ENCODE measurements at regions of chr17 and their contacts with region 1.

Region 1: GRCh38 chr17:4966844-4967538 is 626 bp downstream of the SPAG7 start:
- DNase-seq: peak; percentile 100
- H3K4me3 ChIP-seq: peak overlapping the region; percentile 67 to 86 (median 81)
- H3K27ac ChIP-seq: peak overlapping the region; percentile 89
- H3K4me1 ChIP-seq: peaks cover 29% of the 10 kb centered on the region
- H3K27me3 ChIP-seq: no peaks in the 10 kb centered on the region
- CTCF ChIP-seq: no peak

Region 2: GRCh38 chr17:4986951-4987766 is 20.2 kb after region 1 on chr17 and contains the start of gene CAMTA2:
- CTCF ChIA-PET with region 1: no interaction called
- dilution Hi-C with region 1: no loop called
- in situ Hi-C with region 1: no loop called
- intact Hi-C with region 1: loop called (anchors 1 kb)
- DNase-seq: peak; percentile 50
- H3K4me3 ChIP-seq: peak within 1 kb of the TSS; percentile 78 to 91 (median 85)
- H3K27ac ChIP-seq: peak within 1 kb of the TSS; percentile 38
- H3K4me1 ChIP-seq: peaks cover 14% of the 10 kb centered on the region
- H3K27me3 ChIP-seq: no peaks in the 10 kb centered on the region
- CTCF ChIP-seq: peak; percentile 26 to 72
- total RNA-seq, gene CAMTA2: 15.0 to 69.1 TPM

Region 3: GRCh38 chr17:4997302-4998026 is 30.5 kb after region 1 on chr17 and contains the starts of genes INCA1 and KIF1C:
- CTCF ChIA-PET with region 1: no interaction called
- dilution Hi-C with region 1: no loop called
- in situ Hi-C with region 1: no loop called
- intact Hi-C with region 1: loop called (anchors 1 kb)
- DNase-seq: peak; percentile 90
- H3K4me3 ChIP-seq: peak within 1 kb of the TSS; percentile 65 to 95 (median 82)
- H3K27ac ChIP-seq: peak within 1 kb of the TSS; percentile 43
- H3K4me1 ChIP-seq: peaks cover 12% of the 10 kb centered on the region
- H3K27me3 ChIP-seq: no peaks in the 10 kb centered on the region
- CTCF ChIP-seq: no peak
- total RNA-seq, gene INCA1: 0.33 to 0.42 TPM
- total RNA-seq, gene KIF1C: 105 to 198 TPM

Region 4: DNA sequence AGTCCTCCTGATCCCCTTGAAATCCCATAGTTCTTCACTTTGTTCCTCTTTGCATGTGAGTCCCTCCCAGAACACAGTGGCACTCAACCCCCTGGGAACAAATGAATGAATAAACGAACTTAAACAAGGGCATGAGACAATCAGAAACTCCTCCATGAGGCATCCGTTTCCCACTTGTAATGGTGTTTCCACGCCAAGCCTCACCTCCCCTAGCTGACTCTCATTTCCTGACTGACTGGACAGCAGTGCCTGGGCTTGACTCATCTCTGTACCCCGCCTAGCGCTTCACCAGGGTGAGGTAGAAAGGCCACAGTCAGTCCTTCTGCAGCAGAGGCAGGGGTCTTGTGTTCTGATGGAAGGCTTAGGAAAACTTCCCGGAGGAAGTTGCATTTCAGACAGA is 44.9 kb after region 1 on chr17:
- CTCF ChIA-PET with region 1: no interaction called
- dilution Hi-C with region 1: loop called (anchors 5 kb)
- in situ Hi-C with region 1: no loop called
- intact Hi-C with region 1: no loop called
- DNase-seq: peak; percentile 51
- H3K4me3 ChIP-seq: no peak overlapping the region
- H3K27ac ChIP-seq: no peak overlapping the region
- H3K4me1 ChIP-seq: no peaks in the 10 kb centered on the region
- H3K27me3 ChIP-seq: no peaks in the 10 kb centered on the region
- CTCF ChIP-seq: no peak

Region 5: DNA sequence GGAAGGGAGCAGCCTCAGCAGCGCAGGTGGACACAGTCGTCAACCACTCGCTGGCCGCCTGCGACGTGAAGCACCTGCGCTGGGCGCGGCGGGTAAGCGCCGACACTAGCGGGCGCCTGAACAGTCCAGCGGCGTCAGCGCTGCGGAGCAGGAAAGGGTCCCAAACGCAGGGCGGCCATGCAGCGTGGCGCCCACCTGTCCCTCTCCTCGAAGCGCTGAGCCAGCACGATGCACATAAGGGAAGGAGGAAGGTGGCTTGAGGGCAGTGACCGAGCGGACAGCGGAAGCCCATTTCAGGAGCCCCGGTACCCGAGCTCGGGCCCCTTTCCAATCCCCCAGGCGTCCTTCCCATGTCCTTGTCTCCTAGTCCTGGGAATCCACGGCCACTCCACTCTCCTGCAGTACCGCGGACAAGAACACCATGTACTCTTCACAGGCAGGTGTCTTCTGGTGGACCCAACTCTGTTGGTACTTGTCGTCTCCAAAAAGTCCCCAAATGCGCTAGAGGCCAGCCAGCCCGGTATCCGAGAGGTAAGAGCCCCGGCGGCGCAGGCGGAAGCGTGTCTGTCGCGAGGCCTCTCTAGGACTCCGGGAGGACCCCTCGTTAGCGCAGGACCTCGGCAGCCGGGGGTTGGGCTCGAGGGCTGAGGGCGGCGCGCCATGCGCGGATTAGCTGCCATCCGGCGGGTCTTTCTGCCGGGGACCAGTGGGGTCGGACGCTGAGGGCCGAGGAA is 130.3 kb after region 1 on chr17:
- CTCF ChIA-PET with region 1: no interaction called
- dilution Hi-C with region 1: no loop called
- in situ Hi-C with region 1: no loop called
- intact Hi-C with region 1: no loop called
- DNase-seq: no peak
- H3K4me3 ChIP-seq: no peak overlapping the region
- H3K27ac ChIP-seq: no peak overlapping the region
- H3K4me1 ChIP-seq: no peaks in the 10 kb centered on the region
- H3K27me3 ChIP-seq: no peaks in the 10 kb centered on the region
- CTCF ChIP-seq: no peak